Cardiac septum (tissue), 1 donor: ENCODE measurements at regions of chr19 and their contacts with region 1.

Region 1: GRCh38 chr19:50476224-50476942 is at the starts of genes EMC10 and GARIN5A:
- DNase-seq: peak; percentile 91
- total RNA-seq, gene EMC10: 106 TPM
- total RNA-seq, gene GARIN5A: 1.1 TPM

Region 2: DNA sequence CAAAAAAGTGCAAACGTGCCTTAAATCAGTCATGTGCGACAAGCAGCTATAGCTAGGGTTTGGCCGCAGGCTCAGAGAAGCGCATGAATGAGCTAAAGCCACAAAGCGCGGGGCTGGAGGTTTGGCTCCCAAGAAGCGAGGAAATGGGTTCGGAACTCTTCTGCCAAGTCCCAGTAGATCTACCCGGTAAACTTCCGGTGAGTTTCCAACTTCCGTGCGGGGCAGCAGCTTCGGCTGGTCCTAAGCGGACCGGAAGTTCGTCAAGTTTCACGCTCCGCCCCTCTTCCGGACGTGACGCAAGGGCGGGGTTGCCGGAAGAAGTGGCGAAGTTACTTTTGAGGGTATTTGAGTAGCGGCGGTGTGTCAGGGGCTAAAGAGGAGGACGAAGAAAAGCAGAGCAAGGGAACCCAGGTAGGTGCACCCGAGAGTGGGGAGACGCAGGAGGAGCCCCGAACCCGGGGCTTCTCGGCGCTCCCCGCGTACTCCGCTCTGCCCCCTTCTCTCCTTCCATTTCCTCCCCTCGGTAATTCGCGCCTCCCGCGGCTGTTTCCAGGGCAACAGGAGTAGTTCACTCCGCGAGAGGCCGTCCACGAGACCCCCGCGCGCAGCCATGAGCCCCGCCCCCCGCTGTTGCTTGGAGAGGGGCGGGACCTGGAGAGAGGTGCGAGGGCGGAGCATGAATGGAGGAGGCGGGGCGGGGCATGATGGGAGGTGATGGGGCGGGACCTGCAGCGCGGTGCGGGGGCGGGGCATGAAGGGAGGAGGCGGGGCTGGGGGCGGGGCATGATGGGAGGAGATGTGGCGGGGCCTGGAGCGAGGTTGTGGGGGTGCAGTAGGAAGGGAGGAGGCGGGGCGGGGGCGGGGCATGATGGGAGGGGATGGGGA is 100.0 kb before region 1 on chr19 and contains the start of gene NR1H2:
- intact Hi-C with region 1: loop called (anchors 5 kb)
- DNase-seq: peak; percentile 98
- total RNA-seq, gene NR1H2: 86.3 TPM

Region 3: GRCh38 chr19:50511068-50511822 is 34.9 kb after region 1 on chr19 and contains the start of gene JOSD2:
- intact Hi-C with region 1: loop called (anchors 2 kb)
- DNase-seq: peak; percentile 98
- total RNA-seq, gene JOSD2: 36.1 TPM